GM13976 (cell line): ENCODE measurements at regions of chr1 and their contacts with region 1.

Region 1: GRCh38 chr1:35715568-35716002 is 3.1 kb downstream of the C1orf216 start:
- DNase-seq: peak; percentile 85
- CTCF ChIP-seq: peak; percentile 72

Region 2: DNA sequence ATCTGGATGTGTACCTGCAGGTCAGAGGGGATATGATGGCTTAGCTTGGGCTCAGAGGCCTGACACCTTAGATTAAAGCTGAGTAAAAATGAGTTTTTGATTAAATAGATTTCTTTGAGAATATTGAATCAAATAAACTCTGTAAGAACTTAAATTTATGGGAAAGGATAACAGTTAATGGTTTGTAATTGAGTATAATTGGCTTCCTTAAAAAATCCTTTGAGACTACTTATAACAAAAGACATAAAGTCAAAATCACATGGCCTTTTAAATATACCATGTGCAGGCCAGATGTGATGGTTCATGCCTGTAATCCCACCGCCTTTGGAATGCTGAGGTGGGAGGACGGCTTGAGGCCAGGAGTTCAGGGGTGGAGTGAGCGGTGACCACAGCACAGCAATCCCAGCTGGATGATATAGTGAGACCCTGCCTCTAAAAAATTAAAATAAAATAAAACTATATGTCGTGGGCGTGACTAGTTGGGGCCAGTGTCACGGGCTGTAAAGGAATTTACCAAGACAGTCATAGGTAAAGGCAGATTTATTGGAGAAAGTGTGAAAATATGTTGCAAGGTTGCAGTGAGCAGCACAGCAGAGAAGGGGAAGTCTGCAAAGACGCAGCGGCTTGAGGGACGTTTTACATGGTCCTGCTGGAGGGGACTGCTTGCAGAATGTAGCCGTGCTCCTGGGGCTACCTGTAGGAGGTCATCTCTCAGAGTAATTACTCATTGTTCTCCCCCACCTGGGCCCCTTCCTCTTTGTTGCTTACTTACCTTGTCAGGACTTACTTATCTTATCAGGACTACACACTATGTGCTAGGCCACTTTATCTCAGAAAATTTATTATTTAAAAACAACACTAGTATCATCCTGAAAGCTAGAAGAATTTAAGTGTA is 324.7 kb before region 1 on chr1:
- in situ Hi-C with region 1: no loop called
- DNase-seq: no peak
- CTCF ChIP-seq: no peak

Region 3: DNA sequence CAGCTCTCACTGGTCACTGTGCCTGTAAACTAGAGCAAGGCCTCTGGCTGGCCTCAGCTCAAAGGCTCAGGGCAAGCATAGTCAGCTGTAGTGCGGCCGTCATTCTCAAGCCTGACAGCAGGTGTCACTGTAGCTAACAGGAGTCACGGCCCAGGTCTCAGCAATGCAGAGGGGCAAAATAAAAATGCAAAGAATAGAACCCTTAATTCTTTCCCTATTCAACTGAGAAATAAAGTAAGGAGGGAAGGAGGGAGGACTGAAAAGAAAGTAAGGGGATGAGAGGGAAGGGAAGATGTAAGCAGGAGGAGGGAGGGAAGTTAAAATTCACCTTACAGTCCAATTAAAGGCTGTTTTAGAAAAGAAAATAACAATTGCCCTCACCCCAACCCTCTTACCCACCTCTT is 264.5 kb before region 1 on chr1:
- in situ Hi-C with region 1: loop called (anchors 25 kb)
- DNase-seq: peak; percentile 64
- CTCF ChIP-seq: peak; percentile 89

Region 4: DNA sequence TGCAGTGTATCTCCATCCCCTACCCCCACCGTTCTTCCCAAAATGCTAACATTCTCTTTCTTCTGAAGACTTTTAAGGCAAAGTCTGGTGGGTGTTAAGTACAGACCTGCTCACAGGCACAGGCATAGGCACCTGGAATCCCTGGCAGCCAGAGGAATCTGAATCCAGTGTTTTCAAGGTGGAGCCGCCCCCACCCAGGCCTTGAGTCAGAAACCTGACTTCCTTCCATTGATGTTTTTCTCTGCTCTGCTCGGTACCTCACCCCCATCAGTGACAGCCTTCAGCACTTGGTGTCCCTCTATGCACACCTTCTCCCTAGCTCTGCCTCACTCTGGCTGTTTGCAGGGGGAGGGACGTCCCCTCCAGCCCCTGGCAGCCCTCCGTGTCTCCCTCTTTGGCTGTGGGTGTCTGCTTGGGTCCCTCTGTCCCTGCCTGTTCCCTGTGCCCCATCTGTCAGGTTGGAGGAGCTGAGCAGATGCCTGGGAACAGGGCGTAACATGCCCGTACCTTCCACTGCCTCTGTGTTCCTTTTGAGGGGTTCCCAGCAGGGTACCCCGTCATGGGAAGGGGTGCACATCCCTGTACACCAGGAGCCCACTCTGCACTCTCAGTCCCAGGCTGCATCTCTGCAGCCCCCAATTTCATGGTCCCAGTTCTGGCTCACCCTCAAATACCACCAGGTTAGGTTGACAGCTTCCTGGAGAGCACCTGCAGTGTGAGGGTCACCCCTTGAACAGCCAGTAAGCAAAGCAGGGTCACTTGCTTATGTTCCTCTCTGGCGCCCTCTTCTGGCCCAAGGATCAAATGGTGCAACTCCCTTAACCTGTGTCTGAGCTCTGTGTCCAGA is 151.3 kb before region 1 on chr1:
- in situ Hi-C with region 1: loop called (anchors 5 kb)
- DNase-seq: peak; percentile 87
- CTCF ChIP-seq: peak; percentile 83

Region 5: DNA sequence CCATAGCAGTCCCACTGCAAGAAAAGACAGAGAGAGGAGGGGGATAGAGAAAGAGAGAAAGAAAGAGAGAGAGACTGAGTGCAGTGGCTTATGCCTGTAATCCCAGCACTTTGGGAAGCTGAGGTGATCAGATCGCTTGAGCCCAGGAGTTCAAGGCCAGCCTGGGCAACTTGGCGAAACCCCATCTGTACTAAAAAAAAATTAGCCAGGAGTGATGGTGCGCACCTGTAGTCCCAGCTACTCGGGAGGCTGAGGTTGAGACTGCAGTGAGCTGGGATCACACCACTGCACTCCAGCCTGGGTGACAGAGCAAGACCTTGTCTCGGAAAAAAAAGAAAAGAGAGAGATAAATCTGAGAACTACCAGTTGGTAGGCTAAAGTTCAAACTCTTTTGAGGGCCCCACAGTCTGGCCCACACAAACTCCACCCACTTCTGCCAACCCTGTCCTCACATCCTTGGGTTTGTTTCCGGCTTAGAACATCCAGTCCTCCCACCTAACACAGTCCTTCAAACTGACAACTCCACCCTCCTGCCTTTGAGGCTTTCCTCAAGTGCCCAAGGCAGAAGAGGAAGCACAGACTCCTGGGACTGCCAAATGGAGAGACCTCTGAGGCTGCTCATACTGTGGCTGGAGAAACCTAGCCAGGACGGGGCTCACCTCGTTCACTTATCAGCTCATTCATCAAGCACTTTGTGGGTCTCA is 122.4 kb before region 1 on chr1:
- in situ Hi-C with region 1: no loop called
- DNase-seq: no peak
- CTCF ChIP-seq: no peak

Region 6: GRCh38 chr1:35641233-35641866 is 74.2 kb before region 1 on chr1 and contains the start of gene PSMB2:
- in situ Hi-C with region 1: no loop called
- DNase-seq: peak; percentile 92
- CTCF ChIP-seq: no peak